ENCODE measurements at regions of chr3 and their contacts with region 1.

Region 1: GRCh38 chr3:31373681-31374080 is 159.0 kb upstream of the STT3B start:
- DNase-seq: no peak
- CTCF ChIP-seq: no peak

Region 2: GRCh38 chr3:31219131-31219843 is 154.4 kb before region 1 on chr3:
- CTCF ChIA-PET with region 1: no interaction called
- POLR2A ChIA-PET with region 1: no interaction called
- DNase-seq: peak; percentile 30
- CTCF ChIP-seq: no peak

Region 3: GRCh38 chr3:31247850-31248562 is 125.7 kb before region 1 on chr3:
- CTCF ChIA-PET with region 1: no interaction called
- POLR2A ChIA-PET with region 1: no interaction called
- DNase-seq: no peak
- CTCF ChIP-seq: no peak

Region 4: GRCh38 chr3:31321620-31322019 is 52.1 kb before region 1 on chr3:
- CTCF ChIA-PET with region 1: no interaction called
- POLR2A ChIA-PET with region 1: no interaction called
- DNase-seq: no peak
- CTCF ChIP-seq: no peak

Region 5: DNA sequence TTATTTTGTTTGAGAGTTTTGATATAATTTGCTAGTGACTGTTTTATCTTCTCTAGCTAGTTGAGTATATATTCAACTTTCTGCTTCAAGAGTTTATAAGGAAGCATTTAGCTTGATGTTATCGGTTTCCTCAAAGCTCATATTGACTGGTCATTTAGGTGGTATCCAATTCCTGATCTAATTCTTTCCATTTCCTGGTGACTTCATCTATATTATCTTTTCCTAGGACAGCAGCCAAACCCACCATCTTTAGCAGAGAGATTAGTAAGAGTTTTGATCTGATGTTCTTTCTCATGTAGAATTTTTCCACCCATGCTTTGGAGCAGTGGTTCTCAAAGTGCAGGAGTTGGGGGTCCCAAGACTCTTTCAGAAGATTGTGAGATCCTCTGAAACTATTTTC is 10.4 kb after region 1 on chr3:
- CTCF ChIA-PET with region 1: interaction called, 12 read pairs
- POLR2A ChIA-PET with region 1: no interaction called
- DNase-seq: no peak
- CTCF ChIP-seq: no peak

Region 6: DNA sequence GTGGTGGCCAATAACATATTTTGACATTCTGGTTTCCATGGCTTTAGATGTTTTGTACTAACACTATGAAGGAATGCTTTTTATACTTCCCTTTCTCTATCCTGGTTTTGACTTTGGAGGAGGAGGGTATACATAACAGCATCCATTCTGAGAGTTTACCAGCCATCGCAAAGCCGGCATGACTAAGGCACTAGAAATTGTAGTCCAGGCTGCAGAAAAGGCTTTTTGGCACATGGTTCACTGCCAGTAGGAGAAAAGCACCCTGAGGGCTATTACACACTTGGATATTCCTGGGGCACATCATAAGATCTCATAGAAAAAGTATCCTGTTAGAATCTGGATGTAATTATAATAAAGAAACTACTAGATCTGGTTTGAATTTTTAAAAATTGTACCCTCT is 260.8 kb after region 1 on chr3:
- CTCF ChIA-PET with region 1: no interaction called
- POLR2A ChIA-PET with region 1: no interaction called
- DNase-seq: no peak
- CTCF ChIP-seq: no peak